KBM-7 (cell line): ENCODE measurements at regions of chr5 and their contacts with region 1.

Region 1: GRCh38 chr5:126544087-126544740 is 50.8 kb downstream of the ALDH7A1 start:
- DNase-seq: peak; percentile 74

Region 2: DNA sequence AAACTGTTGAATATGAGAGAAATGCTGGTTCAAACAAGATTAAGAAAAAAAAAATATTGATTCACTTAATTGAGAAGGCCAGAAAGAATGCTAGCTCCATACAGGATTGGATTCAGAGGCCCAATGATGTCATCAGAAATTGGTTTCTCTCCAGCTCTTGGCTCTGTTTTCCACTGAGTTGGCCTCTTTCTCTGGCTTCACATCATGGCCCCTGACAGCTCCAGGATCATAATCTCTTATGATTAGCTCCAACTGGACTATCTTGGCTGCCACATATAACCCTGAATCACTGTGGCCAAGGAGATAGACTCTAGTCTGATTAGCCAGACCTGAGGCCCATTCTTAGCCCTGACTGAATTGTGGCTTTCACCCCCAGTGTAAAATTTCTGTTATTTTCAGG is 365.7 kb before region 1 on chr5:
- in situ Hi-C with region 1: no loop called
- DNase-seq: no peak

Region 3: DNA sequence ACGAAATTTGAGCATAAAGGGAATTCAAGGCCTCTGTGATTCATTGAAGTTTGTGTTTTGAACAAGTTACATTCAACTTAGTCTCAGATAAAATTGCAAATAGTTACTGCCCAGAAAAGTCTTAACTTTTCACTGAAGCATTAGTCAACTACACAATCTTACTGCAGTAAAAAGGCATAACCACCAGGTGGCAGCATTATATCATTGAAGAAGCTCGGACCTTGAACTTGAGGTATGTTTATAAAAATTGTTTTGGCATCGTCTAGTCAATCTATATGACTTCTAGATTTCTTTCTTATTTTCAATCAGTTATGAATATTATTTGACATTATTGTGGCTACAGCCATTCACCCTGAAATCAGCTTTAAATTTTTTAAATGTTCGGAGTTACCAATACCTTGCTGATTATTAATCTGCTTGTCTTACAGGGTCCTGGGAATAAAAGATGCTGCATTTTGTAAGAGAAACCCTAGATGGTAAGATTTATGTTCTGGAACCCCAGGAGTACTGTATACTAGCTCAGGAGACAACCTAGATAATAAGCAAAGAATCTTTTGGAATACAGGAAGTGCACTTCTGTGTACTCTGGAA is 204.9 kb before region 1 on chr5:
- in situ Hi-C with region 1: loop called (anchors 25 kb)
- DNase-seq: peak; percentile 57